ENCODE measurements at regions of chr12 and their contacts with region 1.

Region 1: DNA sequence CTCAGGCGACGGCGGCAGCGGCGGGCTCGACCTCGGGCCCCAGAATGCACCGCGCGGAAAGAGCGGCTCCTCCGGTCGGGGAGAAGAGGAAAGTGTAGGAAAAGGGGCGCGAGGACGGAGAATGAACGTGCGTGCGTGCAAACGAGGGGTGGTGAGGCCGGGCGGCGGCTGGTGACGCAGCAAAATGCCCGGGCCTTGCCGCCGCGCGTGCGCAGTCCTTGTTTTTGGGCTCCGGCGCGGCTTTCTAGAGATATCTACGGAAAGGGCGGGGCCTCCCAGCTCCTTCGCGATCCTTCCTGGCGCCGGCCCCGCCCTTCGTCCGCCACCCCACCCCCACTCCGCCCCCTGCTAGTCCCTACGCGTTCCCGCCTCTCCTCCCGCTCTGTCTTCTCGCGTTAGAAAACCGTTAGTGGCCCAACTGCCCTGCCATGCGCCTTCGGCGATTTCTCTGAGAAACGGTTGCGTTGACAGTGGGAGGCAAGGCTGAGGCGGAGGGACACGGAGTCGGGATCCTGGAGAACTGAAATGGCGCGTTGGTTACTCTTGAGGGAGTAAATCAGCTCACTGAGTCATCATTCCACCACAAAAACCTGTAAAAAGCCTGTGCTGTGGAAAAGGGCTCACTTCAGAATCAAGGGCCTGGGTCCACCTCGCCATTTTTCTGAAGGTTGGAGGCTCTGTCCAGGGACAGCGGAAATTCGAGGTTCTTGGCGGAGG is at the start of gene PTGES3:
- DNase-seq: peak; percentile 99
- H3K4me3 Mint-ChIP-seq: peak within 1 kb of the TSS; percentile 99
- H3K27ac Mint-ChIP-seq: peak within 1 kb of the TSS; percentile 100
- H3K4me1 Mint-ChIP-seq: peaks cover 12% of the 10 kb centered on the region
- H3K27me3 Mint-ChIP-seq: no peaks in the 10 kb centered on the region
- CTCF ChIP-seq: no peak
- total RNA-seq, gene PTGES3: 435 and 437 TPM in 2 replicates

Region 2: GRCh38 chr12:56258057-56258819 is 430.0 kb before region 1 on chr12 and contains the start of gene ANKRD52:
- CTCF ChIA-PET with region 1: no interaction called
- intact Hi-C with region 1: no loop called
- DNase-seq: peak; percentile 91
- H3K4me3 Mint-ChIP-seq: peak within 1 kb of the TSS; percentile 83
- H3K27ac Mint-ChIP-seq: peak within 1 kb of the TSS; percentile 55
- H3K4me1 Mint-ChIP-seq: peaks cover 28% of the 10 kb centered on the region
- H3K27me3 Mint-ChIP-seq: no peaks in the 10 kb centered on the region
- CTCF ChIP-seq: peak; percentile 92
- total RNA-seq, gene ANKRD52: 45.3 and 50.6 TPM in 2 replicates

Region 3: GRCh38 chr12:56677680-56678079 is 10.6 kb before region 1 on chr12:
- CTCF ChIA-PET with region 1: interaction called, 12 read pairs
- intact Hi-C with region 1: no loop called
- DNase-seq: no peak
- H3K4me3 Mint-ChIP-seq: no peak overlapping the region
- H3K27ac Mint-ChIP-seq: no peak overlapping the region
- H3K4me1 Mint-ChIP-seq: peaks cover 18% of the 10 kb centered on the region
- H3K27me3 Mint-ChIP-seq: no peaks in the 10 kb centered on the region
- CTCF ChIP-seq: no peak

Region 4: DNA sequence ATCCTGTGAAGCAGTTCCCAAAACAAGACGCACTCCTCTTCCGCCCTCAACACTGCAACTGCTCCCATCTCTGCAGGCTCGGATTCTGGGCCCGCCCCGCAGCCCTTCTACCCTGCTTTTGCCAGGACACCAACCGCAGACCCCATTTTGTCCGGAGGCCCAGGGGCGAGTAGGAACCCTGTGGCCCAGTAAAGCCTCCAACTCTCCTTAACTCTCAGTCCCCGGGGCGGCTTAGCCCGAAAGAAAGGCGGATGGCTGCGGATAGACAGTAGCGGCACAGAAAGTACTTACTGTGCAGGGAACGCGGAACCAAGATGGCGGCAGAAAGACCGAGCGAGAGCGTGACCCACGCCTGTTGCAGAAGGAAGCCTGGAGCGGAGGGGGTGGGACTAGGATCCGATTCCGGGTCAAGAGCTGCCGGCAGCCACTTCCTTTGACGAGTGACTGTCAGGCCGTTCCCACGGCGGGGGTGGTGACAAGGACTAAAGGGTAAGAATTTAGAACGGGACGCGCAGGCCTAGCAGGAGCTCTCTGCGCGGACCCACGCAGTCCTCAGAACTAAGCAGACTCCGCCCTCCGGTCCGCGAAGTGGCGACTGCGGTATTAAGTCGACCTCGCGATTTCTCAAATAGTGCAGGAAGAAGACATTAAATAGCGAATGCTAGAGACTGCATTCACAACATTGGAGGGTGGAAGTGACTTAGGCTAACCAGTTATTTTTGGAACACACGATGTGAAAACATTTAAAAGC is 36.9 kb after region 1 on chr12 and contains the start of gene NACA:
- CTCF ChIA-PET with region 1: interaction called, 8 read pairs
- intact Hi-C with region 1: loop called (anchors 2 kb)
- DNase-seq: peak; percentile 98
- H3K4me3 Mint-ChIP-seq: peak within 1 kb of the TSS; percentile 97
- H3K27ac Mint-ChIP-seq: peak within 1 kb of the TSS; percentile 99
- H3K4me1 Mint-ChIP-seq: peaks cover 35% of the 10 kb centered on the region
- H3K27me3 Mint-ChIP-seq: no peaks in the 10 kb centered on the region
- CTCF ChIP-seq: no peak
- total RNA-seq, gene NACA: 771 and 835 TPM in 2 replicates

Measured in Calu3 (cell line).